HEK293 (cell line): ENCODE measurements at regions of chr12 and their contacts with region 1.

Region 1: GRCh38 chr12:48851883-48852733 is at the start of gene DDX23:
- H3K4me3 ChIP-seq: peak within 1 kb of the TSS; percentile 96
- H3K27ac ChIP-seq: peak within 1 kb of the TSS; percentile 79
- H3K4me1 ChIP-seq: peaks cover 4% of the 10 kb centered on the region
- CTCF ChIP-seq: no peak; the same call in 1 of the 2 replicates

Region 2: GRCh38 chr12:48527891-48528675 is 324.0 kb before region 1 on chr12:
- CTCF ChIA-PET with region 1: no interaction called
- POLR2A ChIA-PET with region 1: no interaction called
- H3K4me3 ChIP-seq: no peak overlapping the region
- H3K27ac ChIP-seq: no peak overlapping the region
- H3K4me1 ChIP-seq: no peaks in the 10 kb centered on the region
- CTCF ChIP-seq: no peak

Region 3: GRCh38 chr12:48651681-48652080 is 200.4 kb before region 1 on chr12:
- CTCF ChIA-PET with region 1: no interaction called
- POLR2A ChIA-PET with region 1: no interaction called
- H3K4me3 ChIP-seq: no peak overlapping the region
- H3K27ac ChIP-seq: no peak overlapping the region
- H3K4me1 ChIP-seq: no peaks in the 10 kb centered on the region
- CTCF ChIP-seq: no peak

Region 4: DNA sequence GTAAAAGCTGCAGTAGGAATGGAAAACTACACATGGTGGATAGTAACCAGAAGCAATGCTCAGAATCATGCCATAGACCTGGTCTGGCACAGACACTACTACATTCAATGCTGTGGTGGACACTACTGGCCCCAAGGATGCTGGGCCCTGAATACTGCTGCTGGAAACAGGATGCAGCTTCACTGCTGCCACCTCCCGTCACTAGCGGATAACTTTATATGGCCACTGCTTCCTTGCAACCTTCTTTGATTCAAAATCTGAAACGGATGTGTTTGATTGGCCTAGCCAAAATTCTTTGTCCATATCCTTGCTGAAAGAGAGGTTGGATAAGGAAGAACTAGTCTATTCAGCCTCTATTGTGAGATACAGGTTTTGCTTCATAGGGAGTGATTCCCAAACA is 93.9 kb before region 1 on chr12:
- CTCF ChIA-PET with region 1: interaction called, 12 read pairs
- POLR2A ChIA-PET with region 1: no interaction called
- H3K4me3 ChIP-seq: no peak overlapping the region
- H3K27ac ChIP-seq: no peak overlapping the region
- H3K4me1 ChIP-seq: no peaks in the 10 kb centered on the region
- CTCF ChIP-seq: no peak

Region 5: GRCh38 chr12:48832321-48833060 is 19.6 kb before region 1 on chr12:
- CTCF ChIA-PET with region 1: interaction called, 7 read pairs
- POLR2A ChIA-PET with region 1: interaction called, 12 read pairs
- H3K4me3 ChIP-seq: no peak overlapping the region
- H3K27ac ChIP-seq: no peak overlapping the region
- H3K4me1 ChIP-seq: no peaks in the 10 kb centered on the region
- CTCF ChIP-seq: no peak

Region 6: GRCh38 chr12:48873096-48873495 is 21.0 kb after region 1 on chr12:
- CTCF ChIA-PET with region 1: interaction called, 64 read pairs
- POLR2A ChIA-PET with region 1: interaction called, 5 read pairs
- H3K4me3 ChIP-seq: no peak overlapping the region
- H3K27ac ChIP-seq: no peak overlapping the region
- H3K4me1 ChIP-seq: no peaks in the 10 kb centered on the region
- CTCF ChIP-seq: no peak

Region 7: GRCh38 chr12:48903982-48904411 is 51.9 kb after region 1 on chr12:
- CTCF ChIA-PET with region 1: interaction called, 54 read pairs
- POLR2A ChIA-PET with region 1: interaction called, 4 read pairs
- H3K4me3 ChIP-seq: peak overlapping the region; percentile 46
- H3K27ac ChIP-seq: no peak overlapping the region
- H3K4me1 ChIP-seq: peaks cover 4% of the 10 kb centered on the region; the same call in 1 of the 2 replicates
- CTCF ChIP-seq: no peak

Region 8: GRCh38 chr12:48977315-48978281 is 125.5 kb after region 1 on chr12:
- CTCF ChIA-PET with region 1: interaction called, 35 read pairs
- POLR2A ChIA-PET with region 1: interaction called, 3 read pairs
- H3K4me3 ChIP-seq: no peak overlapping the region
- H3K27ac ChIP-seq: no peak overlapping the region
- H3K4me1 ChIP-seq: no peaks in the 10 kb centered on the region
- CTCF ChIP-seq: peak; percentile 81